Activated B cell treated with CpG ODN at 0.5 μM for 24 hours (primary cell): ENCODE measurements at regions of chr3 and their contacts with region 1.

Region 1: GRCh38 chr3:108589146-108589997 is at the starts of genes CIP2A and DZIP3:
- DNase-seq: peak; percentile 85
- ATAC-seq: peak; percentile 92
- H3K4me3 Mint-ChIP-seq: peak within 1 kb of the TSS; percentile 97
- H3K27ac Mint-ChIP-seq: peak within 1 kb of the TSS; percentile 100
- H3K4me1 Mint-ChIP-seq: peaks cover 33% of the 10 kb centered on the region
- H3K27me3 Mint-ChIP-seq: no peaks in the 10 kb centered on the region
- CTCF ChIP-seq: no peak
- total RNA-seq, gene CIP2A: 11.3 and 13.1 TPM in 2 replicates
- total RNA-seq, gene DZIP3: 15.5 and 16.7 TPM in 2 replicates

Region 2: DNA sequence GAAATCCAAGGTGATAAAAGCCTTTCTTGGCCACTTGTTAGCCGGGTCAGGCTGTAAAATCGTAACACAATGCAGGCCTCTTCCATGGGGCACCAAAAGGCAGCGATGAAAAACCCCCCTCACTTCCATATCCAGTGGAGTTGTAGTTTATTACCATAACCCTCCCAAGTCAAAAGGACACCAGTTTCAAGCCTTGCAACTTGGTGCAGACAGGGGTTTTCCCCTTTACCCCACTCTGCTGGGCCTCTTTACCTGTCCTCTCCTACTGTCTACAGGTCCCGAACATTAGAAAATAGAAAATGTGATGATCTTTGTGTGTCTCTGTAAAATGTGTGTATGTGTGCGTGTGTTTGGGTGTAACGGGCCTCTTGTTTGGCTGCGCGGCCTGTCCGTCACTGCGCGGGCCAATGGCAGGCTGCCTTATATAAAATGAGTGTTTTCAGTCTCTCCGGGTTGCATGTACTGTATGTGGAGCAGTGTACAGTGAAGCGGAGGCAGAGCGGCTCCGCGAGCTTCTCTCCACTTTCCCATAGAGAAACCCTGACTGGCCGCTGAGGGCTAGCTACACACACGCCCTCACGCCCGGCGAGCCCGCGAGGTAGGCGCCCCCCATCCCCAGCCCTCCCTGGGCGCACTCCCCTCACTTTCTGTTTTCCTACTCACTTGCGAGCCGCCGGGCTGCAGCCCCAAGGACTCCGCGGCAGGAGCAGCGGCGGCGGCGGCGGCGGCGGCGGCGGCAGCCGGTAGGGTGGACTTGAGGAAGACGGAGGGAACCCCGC is 1066.7 kb before region 1 on chr3 and contains the start of gene BBX:
- CTCF ChIA-PET with region 1: no interaction called
- POLR2A ChIA-PET with region 1: interaction called, 9 read pairs
- intact Hi-C with region 1: loop called (anchors 2 kb)
- DNase-seq: peak; percentile 89
- ATAC-seq: peak; percentile 87
- H3K4me3 Mint-ChIP-seq: peak within 1 kb of the TSS; percentile 96
- H3K27ac Mint-ChIP-seq: peak within 1 kb of the TSS; percentile 98
- H3K4me1 Mint-ChIP-seq: peaks cover 37% of the 10 kb centered on the region
- H3K27me3 Mint-ChIP-seq: no peaks in the 10 kb centered on the region
- CTCF ChIP-seq: no peak
- total RNA-seq, gene BBX: 75.8 and 77.5 TPM in 2 replicates

Region 3: GRCh38 chr3:108322352-108322751 is 267.0 kb before region 1 on chr3:
- CTCF ChIA-PET with region 1: no interaction called
- POLR2A ChIA-PET with region 1: no interaction called
- intact Hi-C with region 1: no loop called
- DNase-seq: no peak
- ATAC-seq: peak; percentile 91
- H3K4me3 Mint-ChIP-seq: no peak overlapping the region
- H3K27ac Mint-ChIP-seq: peak overlapping the region; percentile 57
- H3K4me1 Mint-ChIP-seq: peaks cover 14% of the 10 kb centered on the region
- H3K27me3 Mint-ChIP-seq: no peaks in the 10 kb centered on the region
- CTCF ChIP-seq: no peak

Region 4: GRCh38 chr3:108564564-108564963 is 24.8 kb before region 1 on chr3:
- CTCF ChIA-PET with region 1: no interaction called
- POLR2A ChIA-PET with region 1: no interaction called
- intact Hi-C with region 1: no loop called
- DNase-seq: no peak
- ATAC-seq: no peak
- H3K4me3 Mint-ChIP-seq: no peak overlapping the region
- H3K27ac Mint-ChIP-seq: no peak overlapping the region
- H3K4me1 Mint-ChIP-seq: no peaks in the 10 kb centered on the region
- H3K27me3 Mint-ChIP-seq: no peaks in the 10 kb centered on the region
- CTCF ChIP-seq: no peak

Region 5: GRCh38 chr3:108602249-108602934 is 13.0 kb after region 1 on chr3:
- CTCF ChIA-PET with region 1: interaction called, 12 read pairs
- POLR2A ChIA-PET with region 1: interaction called, 96 read pairs
- intact Hi-C with region 1: loop called (anchors 1 kb)
- DNase-seq: no peak
- ATAC-seq: peak; percentile 81
- H3K4me3 Mint-ChIP-seq: peak overlapping the region; percentile 65
- H3K27ac Mint-ChIP-seq: peak overlapping the region; percentile 72
- H3K4me1 Mint-ChIP-seq: peaks cover 31% of the 10 kb centered on the region
- H3K27me3 Mint-ChIP-seq: no peaks in the 10 kb centered on the region
- CTCF ChIP-seq: no peak

Region 6: GRCh38 chr3:108669208-108669607 is 79.8 kb after region 1 on chr3:
- CTCF ChIA-PET with region 1: interaction called, 6 read pairs
- POLR2A ChIA-PET with region 1: interaction called, 12 read pairs
- intact Hi-C with region 1: no loop called
- DNase-seq: no peak
- ATAC-seq: peak; percentile 79
- H3K4me3 Mint-ChIP-seq: peak overlapping the region; percentile 8
- H3K27ac Mint-ChIP-seq: peak overlapping the region; percentile 70
- H3K4me1 Mint-ChIP-seq: peaks cover 29% of the 10 kb centered on the region
- H3K27me3 Mint-ChIP-seq: no peaks in the 10 kb centered on the region
- CTCF ChIP-seq: no peak

Region 7: GRCh38 chr3:108744762-108745161 is 155.4 kb after region 1 on chr3:
- CTCF ChIA-PET with region 1: no interaction called
- POLR2A ChIA-PET with region 1: no interaction called
- intact Hi-C with region 1: no loop called
- DNase-seq: no peak
- ATAC-seq: no peak
- H3K4me3 Mint-ChIP-seq: no peak overlapping the region
- H3K27ac Mint-ChIP-seq: no peak overlapping the region
- H3K4me1 Mint-ChIP-seq: no peaks in the 10 kb centered on the region
- H3K27me3 Mint-ChIP-seq: peaks cover 7% of the 10 kb centered on the region
- CTCF ChIP-seq: no peak

Region 8: DNA sequence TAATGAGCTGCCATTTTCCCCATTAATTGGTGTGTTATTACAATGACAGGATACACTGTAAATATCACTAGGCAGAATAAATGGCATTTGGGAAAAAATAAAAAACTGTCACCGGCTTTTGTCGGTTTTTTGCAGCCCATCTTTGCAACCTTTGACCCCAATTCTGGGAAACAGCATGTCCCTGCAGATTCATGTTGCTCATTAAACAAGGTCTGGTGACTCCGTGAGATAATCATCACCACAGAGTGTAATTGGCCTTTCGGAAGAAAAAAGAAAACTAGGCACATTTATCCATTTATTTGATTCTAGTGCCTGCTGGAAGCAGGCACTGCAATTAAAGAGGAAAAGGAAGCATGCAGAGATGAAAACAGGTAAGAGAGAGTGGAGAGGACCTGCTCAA is 297.7 kb after region 1 on chr3:
- CTCF ChIA-PET with region 1: no interaction called
- POLR2A ChIA-PET with region 1: no interaction called
- intact Hi-C with region 1: no loop called
- DNase-seq: no peak
- ATAC-seq: no peak
- H3K4me3 Mint-ChIP-seq: no peak overlapping the region
- H3K27ac Mint-ChIP-seq: no peak overlapping the region
- H3K4me1 Mint-ChIP-seq: no peaks in the 10 kb centered on the region
- H3K27me3 Mint-ChIP-seq: no peaks in the 10 kb centered on the region
- CTCF ChIP-seq: no peak